Left cardiac atrium (tissue), 4 donors: ENCODE measurements at regions of chr19 and their contacts with region 1.

Region 1: GRCh38 chr19:46990991-46991676 is 28.5 kb upstream of the NPAS1 start:
- DNase-seq: peak; percentile 88
- ATAC-seq: peak; percentile 79 to 80

Region 2: DNA sequence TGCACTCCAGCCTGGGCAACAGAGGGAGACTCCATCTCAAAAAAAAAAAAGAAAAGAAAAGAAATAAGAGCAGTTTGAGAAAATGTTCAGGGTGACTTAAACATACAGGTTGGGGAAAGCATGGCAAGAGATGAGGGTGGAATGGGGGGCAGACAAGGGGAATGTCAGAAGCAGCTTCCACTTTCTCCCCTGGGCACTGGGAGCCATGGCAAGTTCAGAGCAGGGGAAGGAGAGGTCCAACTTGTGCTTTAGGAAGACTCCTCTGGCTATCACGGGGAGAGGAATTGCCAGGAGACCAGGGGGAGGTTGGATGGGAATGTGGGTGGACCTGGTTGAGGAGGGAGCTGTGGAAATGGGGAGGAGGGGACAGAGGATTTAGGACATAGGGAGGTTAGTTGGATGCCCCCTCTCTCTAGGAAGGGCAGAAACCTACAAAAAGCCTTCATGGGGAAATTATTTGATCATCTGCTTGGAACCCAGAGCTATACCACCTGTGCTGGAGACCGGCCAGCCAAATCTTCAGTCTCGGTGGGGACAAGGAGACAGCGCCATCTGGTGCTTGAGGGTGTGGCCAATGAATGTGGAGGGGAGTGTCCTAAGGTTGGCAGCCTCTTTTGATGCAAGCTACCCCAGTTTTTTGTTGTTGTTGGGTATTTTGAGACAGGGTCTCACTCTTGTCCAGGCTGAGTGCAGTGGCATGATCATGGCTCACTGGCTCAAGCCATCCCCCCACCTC is 237.5 kb before region 1 on chr19:
- intact Hi-C with region 1: loop called in 1 of 2 experiments (anchors 10 kb)
- DNase-seq: no peak
- ATAC-seq: no peak

Region 3: GRCh38 chr19:46860125-46860845 is 130.8 kb before region 1 on chr19:
- intact Hi-C with region 1: loop called (anchors 2 to 5 kb)
- DNase-seq: peak; percentile 99
- ATAC-seq: peak; percentile 89 to 93

Region 4: GRCh38 chr19:46954993-46955812 is 35.9 kb before region 1 on chr19:
- intact Hi-C with region 1: no loop called
- DNase-seq: no peak
- ATAC-seq: peak; percentile 49 to 59